ENCODE measurements at regions of chr22 and their contacts with region 1.

Region 1: DNA sequence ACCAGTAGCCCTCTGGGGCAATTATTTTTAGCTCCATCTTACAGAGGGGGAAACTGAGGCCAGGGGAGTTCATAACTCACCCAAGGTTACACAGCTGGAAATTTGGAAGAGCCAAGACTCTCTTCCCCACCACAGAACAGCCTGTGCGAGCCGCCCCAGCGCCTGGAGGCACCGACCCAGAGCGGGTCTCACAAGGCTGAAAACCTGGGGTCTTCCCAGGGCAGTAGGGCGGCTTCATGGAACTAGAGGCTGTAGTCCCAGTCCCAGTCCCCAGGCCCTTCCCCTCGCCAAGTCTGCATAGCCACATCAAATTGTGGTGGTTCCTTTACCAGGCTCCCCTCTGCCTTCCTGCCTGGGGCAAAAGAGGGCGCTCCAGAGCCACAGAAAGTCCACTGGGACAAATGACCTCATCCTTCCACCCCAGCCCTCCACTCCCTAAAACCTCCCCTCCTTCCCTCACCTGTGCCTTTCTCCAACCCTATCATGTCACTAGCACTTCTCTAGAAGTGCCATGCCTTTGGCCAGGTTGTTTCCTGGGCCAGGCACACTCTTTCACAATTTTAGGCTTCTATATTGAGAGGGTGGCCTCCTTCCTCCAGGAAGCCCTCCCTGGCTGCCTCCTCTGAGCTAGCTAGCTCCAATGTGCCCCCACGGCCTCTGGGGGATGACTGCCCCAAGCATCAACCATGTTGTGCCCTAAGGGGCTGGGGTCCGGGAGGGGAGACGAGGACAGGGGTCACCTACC is 15.2 kb upstream of the CDC42EP1 start:
- DNase-seq: no peak
- ATAC-seq: peak; percentile 76
- H3K4me3 ChIP-seq: peak overlapping the region; percentile 46 to 59
- H3K27ac ChIP-seq: peak overlapping the region; percentile 78
- H3K4me1 ChIP-seq: peaks cover 37 to 69% of the 10 kb centered on the region in 2 experiments
- H3K27me3 ChIP-seq: no peaks in the 10 kb centered on the region
- CTCF ChIP-seq: peak; percentile 87 to 91 (median 89)
- POLR2A ChIP-seq: no peak
- RAD21 ChIP-seq: peak; percentile 89

Region 2: GRCh38 chr22:37462983-37463382 is 82.1 kb before region 1 on chr22:
- CTCF ChIA-PET with region 1: no interaction called
- POLR2A ChIA-PET with region 1: no interaction called
- RAD21 ChIA-PET with region 1: no interaction called
- intact Hi-C with region 1: no loop called
- DNase-seq: no peak
- ATAC-seq: peak; percentile 49; the same call in 1 of the 2 replicates
- H3K4me3 ChIP-seq: no peak overlapping the region
- H3K27ac ChIP-seq: no peak overlapping the region
- H3K4me1 ChIP-seq: peaks cover 3 to 4% of the 10 kb centered on the region in 2 experiments; a peak in 3 of 4 replicates
- H3K27me3 ChIP-seq: no peaks in the 10 kb centered on the region; the same call in 1 of the 2 replicates
- CTCF ChIP-seq: no peak
- POLR2A ChIP-seq: no peak
- RAD21 ChIP-seq: no peak

Region 3: DNA sequence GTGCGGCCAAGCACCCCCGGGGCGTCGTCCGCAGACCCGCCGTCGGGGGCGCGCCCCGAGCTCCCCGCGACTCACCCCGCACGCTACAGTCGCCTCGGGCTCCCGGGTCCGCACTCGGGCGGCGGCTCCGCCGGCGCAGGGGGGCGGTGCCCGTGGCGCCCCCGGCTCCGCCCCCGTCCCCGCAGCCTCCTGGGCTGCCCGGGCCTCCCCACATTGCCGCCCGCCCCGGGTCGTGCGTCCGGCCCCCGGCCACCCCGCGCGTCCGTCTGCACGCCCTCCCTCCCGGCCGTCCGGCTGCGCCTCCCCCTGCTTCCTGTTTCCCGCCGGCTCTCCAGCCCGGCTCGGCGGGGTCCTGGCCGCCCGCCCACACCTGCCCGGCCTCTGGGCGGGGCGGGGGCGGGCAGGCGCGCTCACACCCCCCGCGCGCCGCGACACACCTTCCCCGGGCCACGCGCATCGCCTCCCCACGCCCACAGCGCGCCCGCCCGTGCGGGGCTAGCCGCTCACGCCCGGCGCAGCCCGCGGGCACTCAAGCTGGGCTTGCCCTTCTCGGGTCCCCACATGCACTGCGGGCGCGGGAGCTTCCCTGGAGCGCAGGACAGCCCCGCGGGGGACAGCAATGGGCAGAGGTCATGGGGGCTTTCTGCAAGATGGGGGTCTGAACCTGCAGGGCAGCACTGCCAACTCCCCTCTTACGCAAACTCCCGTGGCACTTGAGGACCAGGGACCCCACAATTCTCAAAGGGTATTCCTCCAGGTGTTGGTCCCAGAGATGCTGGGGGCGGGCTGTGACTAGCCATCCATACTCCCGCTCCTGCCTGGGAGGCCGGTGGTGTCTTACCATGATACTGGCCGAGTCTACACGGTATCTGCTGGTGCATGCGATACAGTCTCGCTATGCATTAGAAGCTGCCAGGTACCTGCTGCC is 25.6 kb before region 1 on chr22 and contains the start of gene CARD10:
- CTCF ChIA-PET with region 1: no interaction called
- POLR2A ChIA-PET with region 1: no interaction called
- RAD21 ChIA-PET with region 1: interaction called in 1 of 2 experiments, 12 read pairs
- intact Hi-C with region 1: no loop called
- DNase-seq: no peak
- ATAC-seq: peak; percentile 74
- H3K4me3 ChIP-seq: peak within 1 kb of the TSS; percentile 69 to 89
- H3K27ac ChIP-seq: peak within 1 kb of the TSS; percentile 68
- H3K4me1 ChIP-seq: peaks cover 6 to 46% of the 10 kb centered on the region in 2 experiments; a peak in 3 of 4 replicates
- H3K27me3 ChIP-seq: no peaks in the 10 kb centered on the region
- CTCF ChIP-seq: no peak
- POLR2A ChIP-seq: no peak
- RAD21 ChIP-seq: no peak
- total RNA-seq, gene CARD10: 32.0 TPM

Region 4: GRCh38 chr22:37566903-37567820 is 22.0 kb after region 1 on chr22:
- CTCF ChIA-PET with region 1: interaction called, 238 read pairs
- POLR2A ChIA-PET with region 1: interaction called, 21 read pairs
- RAD21 ChIA-PET with region 1: interaction called, 8 to 17 read pairs
- intact Hi-C with region 1: loop called (anchors 1 kb)
- DNase-seq: peak; percentile 84
- ATAC-seq: peak; percentile 62
- H3K4me3 ChIP-seq: no peak overlapping the region
- H3K27ac ChIP-seq: peak overlapping the region; percentile 72
- H3K4me1 ChIP-seq: peaks cover 76 to 98% of the 10 kb centered on the region in 2 experiments
- H3K27me3 ChIP-seq: no peaks in the 10 kb centered on the region
- CTCF ChIP-seq: peak in 2 of 3 experiments; percentile 94 to 97; a peak in 4 of 6 replicates
- POLR2A ChIP-seq: no peak
- RAD21 ChIP-seq: no peak

Region 5: DNA sequence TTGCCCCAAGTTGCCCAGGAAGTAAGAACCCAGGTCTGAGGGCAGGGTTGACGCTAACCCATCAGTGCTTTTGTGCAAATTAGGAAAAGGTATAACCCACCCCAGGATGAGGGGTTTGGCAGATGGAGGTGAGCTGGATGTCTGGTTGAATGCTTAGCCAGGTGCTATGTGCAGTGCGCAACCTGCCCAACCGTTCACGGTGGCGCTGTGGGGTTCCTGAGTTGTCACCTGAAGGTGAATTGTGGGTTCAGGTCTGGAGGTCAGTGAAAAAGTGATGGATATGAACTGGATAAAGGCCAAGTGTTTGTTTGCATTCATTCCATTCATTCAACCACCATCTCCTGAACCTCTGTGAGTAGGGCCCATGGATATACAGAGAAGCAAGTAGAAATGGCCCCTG is 49.1 kb after region 1 on chr22:
- CTCF ChIA-PET with region 1: interaction called, 35 read pairs
- POLR2A ChIA-PET with region 1: interaction called, 4 read pairs
- RAD21 ChIA-PET with region 1: interaction called, 3 to 14 read pairs
- intact Hi-C with region 1: no loop called
- DNase-seq: no peak
- ATAC-seq: peak; percentile 70
- H3K4me3 ChIP-seq: no peak overlapping the region
- H3K27ac ChIP-seq: no peak overlapping the region
- H3K4me1 ChIP-seq: peaks cover 4 to 22% of the 10 kb centered on the region in 2 experiments; a peak in 3 of 4 replicates
- H3K27me3 ChIP-seq: no peaks in the 10 kb centered on the region
- CTCF ChIP-seq: peak; percentile 35 to 68 (median 63); a peak in 5 of 6 replicates
- POLR2A ChIP-seq: no peak
- RAD21 ChIP-seq: peak; percentile 34; the same call in 1 of the 2 replicates

Region 6: GRCh38 chr22:37940698-37941376 is 395.7 kb after region 1 on chr22:
- CTCF ChIA-PET with region 1: no interaction called
- POLR2A ChIA-PET with region 1: no interaction called
- RAD21 ChIA-PET with region 1: no interaction called
- intact Hi-C with region 1: no loop called
- DNase-seq: no peak
- ATAC-seq: peak; percentile 13; the same call in 1 of the 2 replicates
- H3K4me3 ChIP-seq: no peak overlapping the region
- H3K27ac ChIP-seq: no peak overlapping the region
- H3K4me1 ChIP-seq: no peaks in the 10 kb centered on the region
- H3K27me3 ChIP-seq: no peaks in the 10 kb centered on the region
- CTCF ChIP-seq: no peak
- POLR2A ChIP-seq: no peak
- RAD21 ChIP-seq: no peak

Region 7: GRCh38 chr22:38088629-38089473 is 543.7 kb after region 1 on chr22:
- CTCF ChIA-PET with region 1: no interaction called
- POLR2A ChIA-PET with region 1: no interaction called
- RAD21 ChIA-PET with region 1: no interaction called
- intact Hi-C with region 1: no loop called
- DNase-seq: no peak
- ATAC-seq: no peak
- H3K4me3 ChIP-seq: no peak overlapping the region
- H3K27ac ChIP-seq: no peak overlapping the region
- H3K4me1 ChIP-seq: peaks cover 0 to 4% of the 10 kb centered on the region in 2 experiments; a peak in 1 of 4 replicates
- H3K27me3 ChIP-seq: no peaks in the 10 kb centered on the region
- CTCF ChIP-seq: no peak
- POLR2A ChIP-seq: no peak
- RAD21 ChIP-seq: no peak